Vagina (tissue), 2 donors: ENCODE measurements at regions of chr3 and their contacts with region 1.

Region 1: DNA sequence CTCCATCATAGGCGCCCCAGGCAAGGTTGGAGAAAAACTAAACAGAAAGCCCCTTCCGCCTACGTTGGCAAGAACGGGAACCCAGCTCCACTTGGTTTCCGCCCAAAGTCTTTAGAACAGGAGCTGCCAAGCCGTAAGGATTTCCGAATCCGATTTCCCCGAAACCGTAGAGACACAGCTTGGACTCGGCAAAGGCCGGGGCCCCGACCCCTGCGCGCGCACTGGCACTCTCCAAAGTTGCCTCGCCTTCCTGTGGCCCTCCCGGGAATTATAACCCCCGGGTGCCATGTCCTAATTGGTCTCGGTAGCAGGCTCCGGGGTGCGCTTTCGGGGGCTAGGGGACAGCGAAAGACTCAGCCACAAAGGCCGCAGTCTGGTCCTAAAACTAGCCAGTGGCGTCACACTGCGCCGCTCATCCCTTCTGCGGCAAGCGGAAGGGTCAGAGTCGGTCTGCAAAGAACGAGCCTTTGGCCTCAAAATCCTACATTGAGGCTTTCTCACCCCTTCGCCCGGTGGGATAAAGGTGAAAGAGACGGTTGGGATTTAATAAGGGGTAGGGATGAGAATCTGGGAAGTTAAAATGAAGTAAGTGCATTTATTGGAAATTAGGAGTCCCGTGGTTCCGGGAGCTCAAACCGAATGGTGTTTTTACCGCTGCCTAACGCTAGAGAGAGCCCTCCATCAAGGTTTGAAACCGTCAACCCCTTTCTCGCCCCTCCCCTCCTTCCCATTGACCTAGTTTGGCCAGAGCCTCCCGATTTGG is 6.8 kb downstream of the BCL6 start:
- DNase-seq: peak in 1 of 2 donors; percentile 97
- H3K4me3 ChIP-seq: peak overlapping the region; percentile 52 to 77
- H3K27ac ChIP-seq: peak overlapping the region; percentile 99
- H3K4me1 ChIP-seq: peaks cover 44% of the 10 kb centered on the region
- H3K27me3 ChIP-seq: no peaks in the 10 kb centered on the region
- CTCF ChIP-seq: peak; percentile 33 to 68 (median 58)
- POLR2A ChIP-seq: no peak

Region 2: DNA sequence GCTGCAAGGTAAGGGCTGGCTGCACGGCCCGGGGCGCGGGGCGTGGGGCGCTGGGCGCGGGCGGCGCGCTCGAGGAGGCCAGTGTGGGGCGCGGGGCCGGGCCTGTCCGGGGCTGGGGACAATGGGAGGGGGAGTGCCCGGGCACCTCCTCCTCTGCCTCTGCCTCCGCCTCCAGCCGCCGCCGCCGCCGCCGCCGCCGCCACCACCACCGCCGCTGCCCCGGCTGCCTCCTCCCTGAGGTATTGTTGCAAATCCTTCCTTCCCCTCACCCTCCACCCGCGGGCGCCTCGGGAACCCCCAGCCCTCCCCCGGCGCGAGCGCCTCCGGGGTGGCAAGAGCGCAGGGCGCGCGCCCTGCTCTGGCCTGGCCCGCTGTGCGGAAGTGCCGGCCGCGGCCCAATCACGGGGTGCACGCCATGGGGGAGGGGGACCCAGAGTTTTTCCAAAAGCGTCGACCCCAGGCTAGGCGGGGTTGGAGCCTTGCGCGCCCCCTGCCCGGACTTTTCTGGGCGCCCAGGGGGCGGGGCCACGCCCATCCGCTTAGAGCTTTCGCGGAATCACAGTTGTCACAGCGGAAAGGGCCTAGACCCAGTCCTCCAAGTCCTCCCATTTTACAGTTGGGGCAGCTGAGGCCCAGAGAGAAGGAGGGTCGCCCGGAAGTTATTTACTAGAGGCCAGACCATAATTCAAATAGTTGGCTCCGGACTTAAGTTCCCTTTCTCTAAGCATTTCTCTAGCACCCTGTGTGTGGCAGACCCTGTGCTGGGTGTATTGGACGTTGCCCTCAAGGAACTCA is 415.7 kb after region 1 on chr3 and contains the start of gene LPP:
- intact Hi-C with region 1: loop called (anchors 5 kb)
- DNase-seq: no peak
- H3K4me3 ChIP-seq: peak within 1 kb of the TSS; percentile 72 to 96
- H3K27ac ChIP-seq: peak within 1 kb of the TSS; percentile 88
- H3K4me1 ChIP-seq: peaks cover 49% of the 10 kb centered on the region
- H3K27me3 ChIP-seq: no peaks in the 10 kb centered on the region
- CTCF ChIP-seq: no peak
- POLR2A ChIP-seq: peak in 1 of 2 donors; percentile 25
- total RNA-seq, gene LPP: 248 TPM